ENCODE measurements at regions of chr1 and their contacts with region 1.

Region 1: GRCh38 chr1:100377590-100378361 is 25.5 kb downstream of the CDC14A start:
- DNase-seq: no peak
- ATAC-seq: peak; percentile 89
- H3K4me3 Mint-ChIP-seq: no peak overlapping the region
- H3K27ac Mint-ChIP-seq: peak overlapping the region; percentile 84
- H3K4me1 Mint-ChIP-seq: peaks cover 62% of the 10 kb centered on the region
- H3K27me3 Mint-ChIP-seq: peaks cover 3% of the 10 kb centered on the region

Region 2: GRCh38 chr1:99969729-99970621 is 407.8 kb before region 1 on chr1 and contains the start of gene SLC35A3:
- CTCF ChIA-PET with region 1: no interaction called
- POLR2A ChIA-PET with region 1: no interaction called
- intact Hi-C with region 1: no loop called
- DNase-seq: peak; percentile 89
- ATAC-seq: peak; percentile 89
- H3K4me3 Mint-ChIP-seq: peak within 1 kb of the TSS; percentile 100
- H3K27ac Mint-ChIP-seq: peak within 1 kb of the TSS; percentile 94
- H3K4me1 Mint-ChIP-seq: peaks cover 26% of the 10 kb centered on the region
- H3K27me3 Mint-ChIP-seq: no peaks in the 10 kb centered on the region
- total RNA-seq, gene SLC35A3: 11.2 to 13.4 TPM

Region 3: DNA sequence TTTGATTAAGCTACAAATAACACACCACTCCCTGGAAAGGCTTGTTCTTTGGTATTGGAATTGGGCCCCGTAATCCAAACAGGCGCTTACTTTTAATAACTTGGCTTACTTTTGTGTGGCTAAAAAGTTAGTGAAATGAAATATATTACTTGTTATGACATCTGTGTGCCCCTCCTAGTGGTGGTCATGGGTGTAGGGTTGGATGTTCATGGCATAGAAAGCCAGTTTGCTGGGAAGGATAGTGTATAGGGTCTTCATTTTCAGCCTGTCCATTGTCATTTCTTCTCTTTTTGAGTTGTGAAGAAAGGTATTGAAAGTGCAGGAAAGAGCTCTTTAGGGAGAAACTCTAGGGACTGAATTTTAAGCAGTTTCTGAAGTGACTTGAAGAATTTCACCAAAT is 19.6 kb before region 1 on chr1:
- CTCF ChIA-PET with region 1: interaction called, 14 read pairs
- POLR2A ChIA-PET with region 1: no interaction called
- intact Hi-C with region 1: no loop called
- DNase-seq: peak; percentile 41
- ATAC-seq: no peak
- H3K4me3 Mint-ChIP-seq: no peak overlapping the region
- H3K27ac Mint-ChIP-seq: peak overlapping the region; percentile 61
- H3K4me1 Mint-ChIP-seq: peaks cover 79% of the 10 kb centered on the region
- H3K27me3 Mint-ChIP-seq: no peaks in the 10 kb centered on the region

Region 4: DNA sequence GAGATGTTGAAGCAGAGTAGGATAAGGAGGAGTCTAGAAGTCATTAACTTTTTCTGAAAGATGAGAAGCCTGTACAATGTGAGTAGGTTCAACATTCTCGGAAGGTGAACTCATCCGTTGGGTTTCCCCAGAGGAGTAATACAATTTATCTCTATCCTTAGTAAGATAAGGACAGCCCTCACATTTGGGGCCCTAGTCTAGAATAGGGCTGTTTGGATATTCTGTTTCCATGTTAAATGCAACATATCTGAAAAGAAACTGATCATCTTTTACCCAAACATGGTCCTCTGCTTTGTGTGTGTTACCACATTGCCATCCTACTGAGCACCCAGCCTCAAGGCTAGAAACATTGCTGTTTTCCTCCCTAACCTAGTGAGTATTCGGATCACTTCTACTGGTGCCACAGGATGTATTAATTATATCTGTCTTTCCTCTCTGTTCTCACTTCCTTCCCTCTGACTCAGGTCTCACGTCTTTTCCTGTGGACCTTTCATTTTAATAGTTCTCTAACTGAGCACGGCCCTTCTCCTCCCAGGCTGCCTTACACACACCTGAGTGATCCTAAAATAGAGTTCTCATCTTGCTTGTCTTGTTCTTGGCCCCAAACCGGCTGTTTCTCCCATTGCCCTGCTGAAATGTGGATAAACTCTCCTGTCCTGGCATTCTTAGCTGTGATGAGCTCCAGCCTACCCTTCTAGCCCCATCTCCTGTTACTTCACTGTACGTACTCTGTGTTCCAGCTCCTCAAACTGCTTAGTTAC is 66.2 kb after region 1 on chr1:
- CTCF ChIA-PET with region 1: no interaction called
- POLR2A ChIA-PET with region 1: no interaction called
- intact Hi-C with region 1: loop called (anchors 2 kb)
- DNase-seq: peak; percentile 49
- ATAC-seq: peak; percentile 79
- H3K4me3 Mint-ChIP-seq: peak overlapping the region; percentile 68
- H3K27ac Mint-ChIP-seq: peak overlapping the region; percentile 93
- H3K4me1 Mint-ChIP-seq: peaks cover 84% of the 10 kb centered on the region
- H3K27me3 Mint-ChIP-seq: no peaks in the 10 kb centered on the region

Region 5: GRCh38 chr1:100452641-100453040 is 74.9 kb after region 1 on chr1:
- CTCF ChIA-PET with region 1: interaction called, 9 read pairs
- POLR2A ChIA-PET with region 1: no interaction called
- intact Hi-C with region 1: loop called (anchors 2 kb)
- DNase-seq: no peak
- ATAC-seq: peak; percentile 65
- H3K4me3 Mint-ChIP-seq: no peak overlapping the region
- H3K27ac Mint-ChIP-seq: peak overlapping the region; percentile 74
- H3K4me1 Mint-ChIP-seq: peaks cover 81% of the 10 kb centered on the region
- H3K27me3 Mint-ChIP-seq: no peaks in the 10 kb centered on the region

Measured in activated CD4-positive, alpha-beta T cell treated with anti-CD3 and anti-CD28 coated beads for 36 hours (primary cell).